Activated CD4-positive, alpha-beta T cell treated with anti-CD3 and anti-CD28 coated beads for 36 hours (primary cell): ENCODE measurements at regions of chr1 and their contacts with region 1.

Region 1: DNA sequence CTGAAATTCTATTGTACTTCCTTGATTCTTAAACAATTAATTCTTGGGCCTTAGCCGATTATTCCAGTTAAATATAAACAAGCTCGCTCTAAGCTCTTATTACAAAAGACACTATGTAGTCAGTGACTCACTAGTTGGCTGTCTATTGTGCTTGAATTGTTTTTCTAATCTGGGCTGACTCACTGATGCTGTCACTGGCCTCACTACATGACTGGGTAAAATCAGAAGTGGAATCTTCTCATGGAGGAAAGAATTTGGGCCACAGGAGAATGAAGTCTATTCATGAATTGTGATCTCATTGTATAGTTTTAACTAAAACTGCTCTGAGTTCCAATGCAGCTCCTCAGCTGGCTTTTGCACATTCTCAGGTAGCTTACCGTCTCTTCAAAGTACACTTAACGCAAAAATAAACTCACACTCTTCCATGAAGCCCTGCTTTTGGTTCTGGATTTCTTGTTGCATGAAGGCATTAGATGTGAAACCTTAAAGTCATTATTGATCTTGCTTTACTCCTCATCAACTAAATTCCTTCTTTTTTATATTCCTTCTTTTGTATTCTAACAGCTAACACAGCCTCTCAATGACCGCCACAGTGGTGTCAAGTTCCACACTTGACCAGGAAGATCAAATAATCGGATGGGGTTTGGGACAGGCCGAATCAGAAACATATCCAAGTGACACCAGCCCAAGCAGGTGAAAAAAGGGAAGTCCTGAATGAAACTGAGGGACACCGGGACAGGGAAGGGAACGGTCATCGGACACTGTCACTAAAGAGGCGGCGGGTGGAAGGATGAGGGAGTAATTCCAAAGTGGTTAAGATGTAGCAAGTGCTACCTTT is 80.9 kb upstream of the LBR start:
- DNase-seq: peak; percentile 24
- ATAC-seq: peak; percentile 88
- H3K4me3 Mint-ChIP-seq: no peak overlapping the region
- H3K27ac Mint-ChIP-seq: no peak overlapping the region
- H3K4me1 Mint-ChIP-seq: peaks cover 12% of the 10 kb centered on the region
- H3K27me3 Mint-ChIP-seq: peaks cover 9% of the 10 kb centered on the region

Region 2: DNA sequence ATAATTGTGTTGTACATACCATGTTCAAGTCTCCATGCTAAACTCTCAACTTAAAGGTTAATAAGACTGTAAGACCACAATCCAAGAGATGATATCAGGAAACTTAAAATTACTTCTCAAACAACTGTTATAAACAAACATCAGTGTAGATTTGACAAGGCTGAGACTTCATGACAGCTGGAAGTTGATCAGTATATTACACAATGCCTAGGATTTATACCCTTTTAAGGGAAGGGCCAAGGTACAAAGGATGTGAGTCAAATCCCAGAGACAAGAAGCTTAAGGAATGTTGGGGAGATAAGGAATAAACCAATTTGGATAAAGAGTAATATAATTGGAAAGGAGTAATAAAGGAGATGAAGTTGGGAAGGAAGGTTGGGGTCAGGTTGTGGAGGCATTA is 179.7 kb before region 1 on chr1:
- CTCF ChIA-PET with region 1: no interaction called
- POLR2A ChIA-PET with region 1: no interaction called
- intact Hi-C with region 1: no loop called
- DNase-seq: no peak
- ATAC-seq: no peak
- H3K4me3 Mint-ChIP-seq: no peak overlapping the region
- H3K27ac Mint-ChIP-seq: no peak overlapping the region
- H3K4me1 Mint-ChIP-seq: no peaks in the 10 kb centered on the region
- H3K27me3 Mint-ChIP-seq: no peaks in the 10 kb centered on the region

Region 3: GRCh38 chr1:225523263-225523950 is 14.7 kb after region 1 on chr1:
- CTCF ChIA-PET with region 1: interaction called, 10 read pairs
- POLR2A ChIA-PET with region 1: no interaction called
- intact Hi-C with region 1: no loop called
- DNase-seq: no peak
- ATAC-seq: no peak
- H3K4me3 Mint-ChIP-seq: no peak overlapping the region
- H3K27ac Mint-ChIP-seq: no peak overlapping the region
- H3K4me1 Mint-ChIP-seq: no peaks in the 10 kb centered on the region
- H3K27me3 Mint-ChIP-seq: no peaks in the 10 kb centered on the region

Region 4: GRCh38 chr1:225735252-225736149 is 226.7 kb after region 1 on chr1:
- CTCF ChIA-PET with region 1: no interaction called
- POLR2A ChIA-PET with region 1: no interaction called
- intact Hi-C with region 1: no loop called
- DNase-seq: no peak
- ATAC-seq: no peak
- H3K4me3 Mint-ChIP-seq: no peak overlapping the region
- H3K27ac Mint-ChIP-seq: no peak overlapping the region
- H3K4me1 Mint-ChIP-seq: no peaks in the 10 kb centered on the region
- H3K27me3 Mint-ChIP-seq: no peaks in the 10 kb centered on the region